ENCODE measurements at regions of chr14 and their contacts with region 1.

Region 1: DNA sequence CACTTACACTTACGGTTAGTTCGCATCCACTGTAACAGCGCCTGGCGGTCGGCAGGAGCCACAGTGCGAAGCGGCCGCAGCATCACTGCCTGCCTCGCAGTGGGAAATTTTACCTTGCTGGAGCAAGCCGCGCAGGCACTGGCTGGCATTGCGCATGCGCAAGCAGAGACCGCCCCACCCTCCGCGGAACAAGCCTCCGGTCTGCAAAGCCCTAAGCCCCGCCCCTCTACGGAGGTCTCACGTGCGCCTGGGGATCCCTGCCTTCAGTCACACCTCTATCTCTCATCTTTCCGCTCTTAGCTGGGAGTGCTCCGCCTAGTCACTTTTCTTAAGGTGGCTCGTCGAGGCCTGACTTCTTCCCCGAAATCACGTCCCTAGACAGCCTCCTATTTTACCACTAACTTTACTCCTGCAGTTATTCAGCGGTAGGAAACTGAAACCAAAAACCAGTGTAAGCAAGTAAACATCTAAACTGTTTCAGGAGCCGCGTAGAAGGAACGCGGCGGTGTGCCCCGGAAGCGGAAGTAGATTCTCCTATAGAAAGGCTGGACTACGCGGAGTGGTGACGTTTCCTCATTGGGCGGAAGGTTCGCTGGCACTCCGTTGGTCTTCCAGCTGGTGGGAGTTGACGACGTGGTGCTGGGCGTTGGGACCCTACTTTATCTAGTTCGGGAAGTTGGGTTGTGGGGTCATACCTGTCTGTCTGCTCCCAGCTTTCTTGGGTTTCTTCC is at the start of gene SRP54:
- DNase-seq: peak; percentile 100
- H3K4me3 Mint-ChIP-seq: no peak within 1 kb of the TSS
- H3K27ac Mint-ChIP-seq: no peak within 1 kb of the TSS
- H3K4me1 Mint-ChIP-seq: peaks cover 38% of the 10 kb centered on the region
- H3K27me3 Mint-ChIP-seq: no peaks in the 10 kb centered on the region
- total RNA-seq, gene SRP54: 66.5 to 72.6 TPM

Region 2: GRCh38 chr14:34582117-34582680 is 400.4 kb before region 1 on chr14:
- CTCF ChIA-PET with region 1: no interaction called
- intact Hi-C with region 1: no loop called
- DNase-seq: no peak
- H3K4me3 Mint-ChIP-seq: no peak overlapping the region
- H3K27ac Mint-ChIP-seq: no peak overlapping the region
- H3K4me1 Mint-ChIP-seq: peaks cover 3% of the 10 kb centered on the region
- H3K27me3 Mint-ChIP-seq: no peaks in the 10 kb centered on the region

Region 3: DNA sequence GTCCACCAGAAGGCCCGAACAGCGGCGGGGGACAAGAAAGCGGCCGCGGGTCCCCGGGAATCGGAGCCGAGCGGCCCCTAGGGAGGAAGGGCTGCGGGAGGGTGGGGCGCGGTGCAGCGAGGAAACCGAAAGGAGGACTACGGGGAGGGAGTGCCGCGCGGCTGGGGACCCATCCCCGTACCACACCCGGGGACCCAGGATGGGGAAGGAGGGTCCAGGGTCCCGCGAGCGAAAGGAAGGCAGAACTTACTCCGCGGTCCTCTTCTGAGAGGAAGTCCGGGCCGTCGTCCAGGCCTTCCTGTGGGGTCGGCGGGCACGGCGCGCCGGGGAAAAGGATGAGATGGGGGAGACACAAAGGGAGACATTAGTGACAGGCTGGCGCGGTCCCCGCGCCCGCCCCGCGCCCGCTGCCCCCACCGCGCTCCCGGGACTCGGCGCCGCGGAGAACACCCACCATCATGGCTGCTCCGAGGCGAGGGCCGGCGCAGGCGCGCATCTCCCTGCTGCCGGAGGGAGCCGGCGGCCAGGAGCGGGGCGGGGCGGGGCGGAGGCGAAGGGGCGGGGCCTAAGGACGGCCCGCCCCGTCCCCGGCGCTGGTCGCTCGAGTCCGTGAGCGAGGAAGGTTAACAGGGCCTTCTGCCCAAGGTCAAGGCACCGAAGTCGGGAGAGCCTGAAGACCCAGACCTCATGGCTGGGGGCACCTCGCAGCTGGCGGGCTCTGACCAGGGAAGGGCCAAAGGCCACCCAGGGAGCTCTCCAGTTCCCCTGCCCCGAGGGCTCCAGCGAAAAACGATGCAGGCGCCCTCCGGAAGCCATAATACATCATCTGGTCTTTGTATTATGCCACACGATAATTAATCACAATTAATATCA is 352.7 kb before region 1 on chr14 and contains the start of gene SNX6:
- CTCF ChIA-PET with region 1: no interaction called
- intact Hi-C with region 1: loop called (anchors 1 kb)
- DNase-seq: peak; percentile 85
- H3K4me3 Mint-ChIP-seq: peak within 1 kb of the TSS; percentile 93
- H3K27ac Mint-ChIP-seq: peak within 1 kb of the TSS; percentile 89
- H3K4me1 Mint-ChIP-seq: peaks cover 20% of the 10 kb centered on the region
- H3K27me3 Mint-ChIP-seq: no peaks in the 10 kb centered on the region
- total RNA-seq, gene SNX6: 73.9 to 74.3 TPM

Region 4: GRCh38 chr14:34873591-34874385 is 108.8 kb before region 1 on chr14:
- CTCF ChIA-PET with region 1: interaction called, 4 read pairs
- intact Hi-C with region 1: loop called (anchors 1 kb)
- DNase-seq: peak; percentile 95
- H3K4me3 Mint-ChIP-seq: peak overlapping the region; percentile 89
- H3K27ac Mint-ChIP-seq: peak overlapping the region; percentile 98
- H3K4me1 Mint-ChIP-seq: peaks cover 35% of the 10 kb centered on the region
- H3K27me3 Mint-ChIP-seq: no peaks in the 10 kb centered on the region

Region 5: DNA sequence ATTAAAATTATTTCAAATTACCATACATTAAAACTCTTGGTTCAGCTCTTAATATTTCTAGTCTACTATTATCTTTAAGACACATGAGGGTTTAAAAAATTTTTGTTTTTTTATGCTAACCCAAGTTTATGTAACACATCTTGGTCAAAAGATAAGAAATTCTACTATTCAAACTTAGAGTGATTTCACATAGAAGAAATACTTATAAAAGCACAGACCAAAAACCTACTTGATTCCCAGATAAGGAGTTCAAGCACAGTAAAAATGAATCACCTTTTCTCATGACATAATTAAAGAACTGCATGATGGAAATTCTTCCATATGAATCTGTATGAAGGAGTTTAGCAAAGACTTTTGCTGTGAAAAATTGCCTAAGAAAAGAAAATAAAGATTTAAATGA is 125.3 kb after region 1 on chr14:
- CTCF ChIA-PET with region 1: no interaction called
- intact Hi-C with region 1: no loop called
- DNase-seq: no peak
- H3K4me3 Mint-ChIP-seq: no peak overlapping the region
- H3K27ac Mint-ChIP-seq: no peak overlapping the region
- H3K4me1 Mint-ChIP-seq: peaks cover 4% of the 10 kb centered on the region
- H3K27me3 Mint-ChIP-seq: no peaks in the 10 kb centered on the region

Region 6: GRCh38 chr14:35121887-35122695 is 139.5 kb after region 1 on chr14 and contains the starts of genes PPP2R3C and PRORP:
- CTCF ChIA-PET with region 1: no interaction called
- intact Hi-C with region 1: loop called (anchors 1 kb)
- DNase-seq: peak; percentile 93
- H3K4me3 Mint-ChIP-seq: peak within 1 kb of the TSS; percentile 95
- H3K27ac Mint-ChIP-seq: peak within 1 kb of the TSS; percentile 99
- H3K4me1 Mint-ChIP-seq: peaks cover 64% of the 10 kb centered on the region
- H3K27me3 Mint-ChIP-seq: no peaks in the 10 kb centered on the region
- total RNA-seq, gene PPP2R3C: 44.5 to 47.5 TPM
- total RNA-seq, gene PRORP: 37.9 to 40.8 TPM

Region 7: DNA sequence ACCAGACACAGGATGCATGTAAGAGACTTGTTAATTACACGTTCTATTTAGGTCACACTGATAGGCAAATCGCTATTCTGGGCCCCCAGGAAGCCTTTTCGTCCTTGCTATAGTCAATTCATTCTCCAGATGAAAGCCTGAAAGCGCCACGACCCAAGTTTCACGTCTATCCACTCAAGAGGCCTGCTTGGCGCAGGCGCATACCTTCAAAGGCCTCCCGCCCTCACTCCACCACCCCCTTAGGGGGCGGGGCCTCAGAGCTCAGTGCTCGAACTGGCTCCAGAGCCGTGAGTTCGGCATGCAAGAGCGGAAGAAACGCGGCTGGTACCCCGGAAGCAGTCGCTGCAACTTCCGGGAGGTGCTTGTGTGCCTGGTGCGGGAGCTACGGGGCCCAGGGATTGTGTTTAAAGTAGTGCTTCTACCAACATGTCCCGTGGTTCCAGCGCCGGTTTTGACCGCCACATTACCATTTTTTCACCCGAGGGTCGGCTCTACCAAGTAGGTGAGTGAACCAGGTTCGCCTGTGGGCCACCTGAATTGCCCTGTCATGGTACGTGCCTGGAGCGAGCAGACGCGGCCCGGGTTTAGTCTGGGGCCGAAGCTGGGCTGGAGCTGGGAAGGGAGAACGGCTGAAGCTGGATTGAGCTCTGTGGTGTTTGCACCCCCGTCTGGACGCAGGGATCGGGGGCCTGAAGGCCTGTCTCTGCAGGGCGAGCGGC is 309.6 kb after region 1 on chr14 and contains the start of gene PSMA6:
- CTCF ChIA-PET with region 1: no interaction called
- intact Hi-C with region 1: loop called (anchors 1 kb)
- DNase-seq: peak; percentile 99
- H3K4me3 Mint-ChIP-seq: peak within 1 kb of the TSS; percentile 98
- H3K27ac Mint-ChIP-seq: peak within 1 kb of the TSS; percentile 97
- H3K4me1 Mint-ChIP-seq: peaks cover 53% of the 10 kb centered on the region
- H3K27me3 Mint-ChIP-seq: no peaks in the 10 kb centered on the region
- total RNA-seq, gene PSMA6: 433 to 437 TPM

Region 8: GRCh38 chr14:35826218-35826951 is 843.8 kb after region 1 on chr14 and contains the start of gene BRMS1L:
- CTCF ChIA-PET with region 1: no interaction called
- intact Hi-C with region 1: loop called (anchors 1 kb)
- DNase-seq: peak; percentile 99
- H3K4me3 Mint-ChIP-seq: peak within 1 kb of the TSS; percentile 84
- H3K27ac Mint-ChIP-seq: peak within 1 kb of the TSS; percentile 92
- H3K4me1 Mint-ChIP-seq: peaks cover 29% of the 10 kb centered on the region
- H3K27me3 Mint-ChIP-seq: no peaks in the 10 kb centered on the region
- total RNA-seq, gene BRMS1L: 4.4 to 5.3 TPM